IMR-90 (cell line): ENCODE measurements at regions of chr16 and their contacts with region 1.

Region 1: GRCh38 chr16:86508947-86509758 is 1.2 kb upstream of the FOXF1 start:
- DNase-seq: peak; percentile 89
- ATAC-seq: peak; percentile 7
- H3K4me3 ChIP-seq: peak overlapping the region; percentile 98
- H3K27ac ChIP-seq: peak overlapping the region; percentile 100
- H3K4me1 ChIP-seq: peaks cover 6% of the 10 kb centered on the region
- H3K27me3 ChIP-seq: no peaks in the 10 kb centered on the region
- CTCF ChIP-seq: no peak
- POLR2A ChIP-seq: peak; percentile 92
- RAD21 ChIP-seq: no peak; the same call in 1 of the 2 replicates

Region 2: DNA sequence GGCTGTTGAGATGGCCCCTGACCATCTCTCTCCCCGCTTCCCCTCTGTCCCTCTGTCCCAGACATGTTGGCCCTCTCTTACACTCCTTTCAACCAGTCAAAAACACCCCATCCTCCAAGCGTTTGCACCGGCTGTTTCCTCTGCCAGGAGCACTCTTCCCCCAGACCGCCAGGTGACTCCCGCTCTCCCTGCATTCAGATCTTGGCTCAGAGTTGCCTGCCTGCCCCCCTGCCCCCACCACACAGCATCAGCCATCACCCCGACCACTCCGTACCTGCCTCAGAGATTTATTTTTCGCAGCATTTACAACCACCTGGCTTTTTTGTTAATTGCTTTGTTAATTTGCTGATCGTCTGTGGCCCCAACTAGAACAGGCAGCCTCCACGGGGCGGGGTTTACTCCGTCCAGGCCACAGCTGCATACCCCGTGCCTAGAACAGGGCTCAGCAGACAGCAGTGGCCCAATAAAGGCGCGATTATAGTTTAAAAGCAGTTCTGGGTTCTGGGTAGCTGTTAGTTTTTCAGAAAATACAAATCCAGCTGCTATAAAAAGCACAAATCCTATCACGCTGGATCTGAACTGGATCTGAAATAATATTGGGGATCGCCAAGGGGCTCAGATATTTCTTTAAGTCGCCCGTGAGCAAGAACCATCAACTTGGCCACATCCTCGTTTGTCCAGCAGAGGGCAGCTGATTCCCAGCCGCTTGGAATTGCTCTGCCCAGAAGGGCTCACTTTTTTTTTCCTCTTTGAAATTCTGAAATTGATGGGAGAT is 436.6 kb before region 1 on chr16:
- CTCF ChIA-PET with region 1: no interaction called
- POLR2A ChIA-PET with region 1: interaction called, 4 read pairs
- dilution Hi-C with region 1: no loop called
- in situ Hi-C with region 1: no loop called
- intact Hi-C with region 1: loop called (anchors 2 kb)
- DNase-seq: peak; percentile 86
- ATAC-seq: peak; percentile 73
- H3K4me3 ChIP-seq: no peak overlapping the region
- H3K27ac ChIP-seq: 0 out of 2 replicates have a peak overlapping the region, but pooled peaks have one; percentile 1
- H3K4me1 ChIP-seq: peaks cover 17% of the 10 kb centered on the region
- H3K27me3 ChIP-seq: no peaks in the 10 kb centered on the region
- CTCF ChIP-seq: peak; percentile 90
- POLR2A ChIP-seq: 0 out of 2 replicates have a peak, but pooled peaks have one; percentile 24
- RAD21 ChIP-seq: peak; percentile 97

Region 3: GRCh38 chr16:86222965-86223551 is 286.1 kb before region 1 on chr16:
- CTCF ChIA-PET with region 1: no interaction called
- POLR2A ChIA-PET with region 1: interaction called, 21 read pairs
- dilution Hi-C with region 1: no loop called
- in situ Hi-C with region 1: loop called (anchors 5 kb)
- intact Hi-C with region 1: loop called (anchors 1 kb)
- DNase-seq: peak; percentile 98
- ATAC-seq: peak; percentile 64
- H3K4me3 ChIP-seq: peak overlapping the region; percentile 52
- H3K27ac ChIP-seq: peak overlapping the region; percentile 99
- H3K4me1 ChIP-seq: peaks cover 33% of the 10 kb centered on the region
- H3K27me3 ChIP-seq: no peaks in the 10 kb centered on the region
- CTCF ChIP-seq: no peak
- POLR2A ChIP-seq: peak; percentile 84; the same call in 1 of the 2 replicates
- RAD21 ChIP-seq: peak; percentile 2; the same call in 1 of the 2 replicates

Region 4: GRCh38 chr16:86306811-86307516 is 202.2 kb before region 1 on chr16:
- CTCF ChIA-PET with region 1: no interaction called
- POLR2A ChIA-PET with region 1: interaction called, 3 read pairs
- dilution Hi-C with region 1: no loop called
- in situ Hi-C with region 1: loop called (anchors 5 kb)
- intact Hi-C with region 1: loop called (anchors 2 kb)
- DNase-seq: peak; percentile 90
- ATAC-seq: peak; percentile 13
- H3K4me3 ChIP-seq: no peak overlapping the region
- H3K27ac ChIP-seq: peak overlapping the region; percentile 67
- H3K4me1 ChIP-seq: peaks cover 38% of the 10 kb centered on the region
- H3K27me3 ChIP-seq: no peaks in the 10 kb centered on the region
- CTCF ChIP-seq: no peak
- POLR2A ChIP-seq: no peak
- RAD21 ChIP-seq: no peak

Region 5: DNA sequence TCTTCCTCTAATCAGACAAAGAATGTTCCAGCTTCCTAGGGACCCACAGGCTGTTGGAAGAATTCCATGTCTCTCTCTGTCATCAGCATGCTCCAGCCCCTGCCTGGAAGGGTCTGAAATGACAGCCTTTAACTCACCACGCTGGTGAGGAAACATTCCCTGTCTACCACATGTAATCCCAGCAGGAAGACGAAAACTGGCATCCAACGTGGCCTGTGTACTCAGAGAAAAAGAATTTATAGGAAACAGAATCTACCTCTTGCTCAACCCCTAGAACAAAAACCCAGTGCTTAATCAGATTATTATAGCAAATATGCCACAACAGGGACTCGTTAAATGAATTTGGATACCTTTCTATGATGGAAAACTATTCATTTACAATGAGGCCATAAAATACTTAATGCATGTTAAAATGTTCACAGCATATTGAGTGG is 146.1 kb before region 1 on chr16:
- CTCF ChIA-PET with region 1: no interaction called
- POLR2A ChIA-PET with region 1: interaction called, 4 read pairs
- dilution Hi-C with region 1: no loop called
- in situ Hi-C with region 1: no loop called
- intact Hi-C with region 1: loop called (anchors 5 kb)
- DNase-seq: peak; percentile 98
- ATAC-seq: peak; percentile 81
- H3K4me3 ChIP-seq: no peak overlapping the region
- H3K27ac ChIP-seq: peak overlapping the region; percentile 81
- H3K4me1 ChIP-seq: peaks cover 30% of the 10 kb centered on the region
- H3K27me3 ChIP-seq: no peaks in the 10 kb centered on the region
- CTCF ChIP-seq: 0 out of 2 replicates have a peak, but pooled peaks have one; percentile 11
- POLR2A ChIP-seq: no peak
- RAD21 ChIP-seq: peak; percentile 39

Region 6: DNA sequence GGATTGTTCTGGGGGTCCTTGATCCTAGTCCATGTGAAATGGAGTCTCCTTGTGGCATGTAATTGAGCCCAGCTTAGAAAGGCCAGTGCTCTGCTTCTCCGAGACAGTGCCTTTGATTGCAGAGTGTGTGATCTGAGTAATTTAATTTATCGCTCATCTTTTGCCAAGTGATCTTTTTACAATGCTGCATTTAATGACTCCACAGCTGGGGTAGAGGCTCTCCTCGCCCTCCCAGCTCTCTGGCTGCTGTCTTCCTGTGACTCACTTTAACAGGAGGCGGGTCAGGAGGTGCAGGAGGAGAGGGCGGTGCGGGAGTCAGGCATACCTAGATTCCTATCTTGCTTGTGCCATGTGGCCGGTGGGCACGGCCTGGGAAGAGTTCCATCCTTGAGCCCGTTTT is 112.3 kb before region 1 on chr16:
- CTCF ChIA-PET with region 1: no interaction called
- POLR2A ChIA-PET with region 1: interaction called, 4 read pairs
- dilution Hi-C with region 1: no loop called
- in situ Hi-C with region 1: no loop called
- intact Hi-C with region 1: loop called (anchors 5 kb)
- DNase-seq: peak; percentile 95
- ATAC-seq: peak; percentile 82
- H3K4me3 ChIP-seq: peak overlapping the region; percentile 10; the same call in 1 of the 2 replicates
- H3K27ac ChIP-seq: peak overlapping the region; percentile 93
- H3K4me1 ChIP-seq: peaks cover 28% of the 10 kb centered on the region
- H3K27me3 ChIP-seq: no peaks in the 10 kb centered on the region
- CTCF ChIP-seq: no peak
- POLR2A ChIP-seq: peak; percentile 61; the same call in 1 of the 2 replicates
- RAD21 ChIP-seq: peak; percentile 4

Region 7: DNA sequence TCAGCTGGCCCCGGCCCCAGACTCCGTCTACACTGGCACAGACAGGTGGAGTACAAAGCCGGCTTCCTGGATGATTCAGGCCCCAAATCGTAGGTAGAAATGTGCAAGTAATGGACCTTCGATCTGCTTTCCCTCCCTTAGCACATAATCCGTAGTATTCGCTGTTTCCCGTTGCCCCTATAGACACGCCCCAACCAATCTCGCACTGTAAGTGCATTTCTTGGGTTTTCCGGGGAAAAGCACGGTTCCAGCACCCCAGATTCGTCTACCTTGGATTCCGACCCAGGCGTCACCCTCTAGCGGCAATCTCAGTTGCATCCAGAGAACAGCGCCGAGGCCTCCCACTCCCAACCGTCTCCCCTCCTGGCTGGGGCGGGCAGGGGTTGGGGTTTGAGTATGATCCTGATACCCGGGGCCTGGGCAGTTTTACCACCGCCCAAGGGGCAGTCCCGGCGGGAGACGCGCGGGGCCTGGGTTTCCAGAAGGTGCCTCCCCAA is 10.9 kb before region 1 on chr16:
- CTCF ChIA-PET with region 1: interaction called, 3 read pairs
- POLR2A ChIA-PET with region 1: interaction called, 18 read pairs
- dilution Hi-C with region 1: no loop called
- in situ Hi-C with region 1: no loop called
- intact Hi-C with region 1: no loop called
- DNase-seq: peak; percentile 37
- ATAC-seq: peak; percentile 13
- H3K4me3 ChIP-seq: peak overlapping the region; percentile 41
- H3K27ac ChIP-seq: peak overlapping the region; percentile 97
- H3K4me1 ChIP-seq: peaks cover 58% of the 10 kb centered on the region
- H3K27me3 ChIP-seq: no peaks in the 10 kb centered on the region
- CTCF ChIP-seq: 0 out of 2 replicates have a peak, but pooled peaks have one; percentile 19
- POLR2A ChIP-seq: no peak; the same call in 1 of the 2 replicates
- RAD21 ChIP-seq: peak; percentile 28; the same call in 1 of the 2 replicates